ENCODE measurements at regions of chr20 and their contacts with region 1.

Region 1: GRCh38 chr20:23995905-23996666 is 7.5 kb upstream of the GGTLC1 start:
- DNase-seq: peak in 1 of 2 experiments; percentile 3
- H3K4me3 ChIP-seq: no peak overlapping the region
- H3K27ac ChIP-seq: no peak overlapping the region
- H3K4me1 ChIP-seq: no peaks in the 10 kb centered on the region
- H3K27me3 ChIP-seq: no peaks in the 10 kb centered on the region
- CTCF ChIP-seq: peak in 2 of 3 experiments; percentile 40 to 46; a peak in 3 of 4 replicates
- EP300 ChIP-seq: no peak
- POLR2A ChIP-seq: no peak
- RAD21 ChIP-seq: peak; percentile 56 to 57

Region 2: GRCh38 chr20:23857962-23858565 is 138.0 kb before region 1 on chr20:
- CTCF ChIA-PET with region 1: no interaction called
- POLR2A ChIA-PET with region 1: no interaction called
- DNase-seq: no peak
- H3K4me3 ChIP-seq: 0 out of 8 replicates have a peak overlapping the region, but pooled peaks of 1 of the 4 experiments have one; percentile 11
- H3K27ac ChIP-seq: no peak overlapping the region
- H3K4me1 ChIP-seq: peaks cover 0 to 4% (median 0%) of the 10 kb centered on the region in 4 experiments; a peak in 1 of 7 replicates
- H3K27me3 ChIP-seq: no peaks in the 10 kb centered on the region
- CTCF ChIP-seq: no peak
- EP300 ChIP-seq: no peak
- POLR2A ChIP-seq: no peak
- RAD21 ChIP-seq: no peak

Region 3: DNA sequence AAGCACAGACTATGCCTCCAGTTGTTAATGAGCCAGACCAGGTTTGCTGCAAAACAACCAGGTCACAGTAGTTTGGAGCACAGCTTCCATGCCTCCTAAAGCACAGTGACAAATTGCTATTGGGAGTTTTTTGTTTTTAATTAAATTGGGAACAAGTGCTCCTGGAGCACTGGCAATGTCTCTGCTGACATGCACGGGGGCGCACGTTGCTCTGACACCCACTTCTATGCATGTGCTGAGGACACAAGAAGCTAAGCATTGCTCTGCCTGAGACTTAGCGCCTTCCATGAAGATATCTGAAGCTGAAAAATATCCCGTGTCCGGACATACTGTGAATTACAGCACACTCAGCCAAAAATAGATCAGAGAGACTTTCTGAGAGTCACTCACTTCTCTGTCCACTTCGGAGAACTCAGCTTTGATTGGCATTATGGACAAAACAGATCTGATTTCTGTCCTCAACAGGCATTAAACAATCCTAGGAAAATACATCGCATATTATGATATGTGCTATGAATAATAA is 11.0 kb after region 1 on chr20:
- CTCF ChIA-PET with region 1: interaction called, 10 read pairs
- POLR2A ChIA-PET with region 1: no interaction called
- DNase-seq: no peak
- H3K4me3 ChIP-seq: no peak overlapping the region
- H3K27ac ChIP-seq: no peak overlapping the region
- H3K4me1 ChIP-seq: peaks cover 0 to 3% (median 1%) of the 10 kb centered on the region in 4 experiments; a peak in 1 of 7 replicates
- H3K27me3 ChIP-seq: no peaks in the 10 kb centered on the region
- CTCF ChIP-seq: no peak
- EP300 ChIP-seq: no peak
- POLR2A ChIP-seq: no peak
- RAD21 ChIP-seq: no peak

Region 4: DNA sequence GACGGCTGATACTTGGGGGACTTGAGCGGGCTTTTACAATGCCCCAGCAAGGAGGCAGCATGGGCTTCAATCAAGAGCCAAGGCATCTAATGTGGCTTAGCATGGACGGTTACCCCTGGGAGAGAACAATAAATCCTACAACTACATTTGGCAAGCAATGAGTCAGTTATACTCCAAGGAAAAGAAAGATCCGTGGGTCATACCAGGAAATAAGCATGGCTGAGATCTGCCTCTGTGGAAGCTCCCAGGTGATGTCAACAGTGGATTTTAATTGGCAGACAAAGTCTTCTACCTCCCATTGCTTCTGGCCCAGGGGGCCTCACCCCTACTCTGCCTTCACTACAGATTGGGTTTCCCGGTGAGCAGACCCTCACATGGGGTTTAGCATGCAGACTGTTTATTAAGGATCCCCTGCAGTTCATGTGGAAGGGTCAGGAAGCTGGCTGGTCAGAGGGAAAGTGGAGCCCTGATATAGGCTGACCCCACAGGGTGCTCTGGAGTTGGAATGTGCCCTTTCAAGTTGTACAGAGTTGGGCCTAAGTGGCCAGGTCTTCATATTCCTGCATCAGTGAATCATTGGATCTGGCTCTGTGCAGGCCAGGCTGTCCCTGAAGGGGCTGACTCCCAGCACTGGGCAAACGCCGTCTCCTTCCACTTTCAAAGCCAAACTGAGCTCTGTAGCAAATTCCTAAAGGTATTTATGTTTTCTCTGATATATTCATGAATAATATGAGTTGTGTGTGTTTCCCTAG is 83.8 kb after region 1 on chr20:
- CTCF ChIA-PET with region 1: no interaction called
- POLR2A ChIA-PET with region 1: no interaction called
- DNase-seq: no peak
- H3K4me3 ChIP-seq: no peak overlapping the region
- H3K27ac ChIP-seq: no peak overlapping the region
- H3K4me1 ChIP-seq: no peaks in the 10 kb centered on the region
- H3K27me3 ChIP-seq: no peaks in the 10 kb centered on the region
- CTCF ChIP-seq: no peak
- EP300 ChIP-seq: no peak
- POLR2A ChIP-seq: no peak
- RAD21 ChIP-seq: no peak

Measured in H1 (cell line).